ENCODE measurements at regions of chr19 and their contacts with region 1.

Region 1: DNA sequence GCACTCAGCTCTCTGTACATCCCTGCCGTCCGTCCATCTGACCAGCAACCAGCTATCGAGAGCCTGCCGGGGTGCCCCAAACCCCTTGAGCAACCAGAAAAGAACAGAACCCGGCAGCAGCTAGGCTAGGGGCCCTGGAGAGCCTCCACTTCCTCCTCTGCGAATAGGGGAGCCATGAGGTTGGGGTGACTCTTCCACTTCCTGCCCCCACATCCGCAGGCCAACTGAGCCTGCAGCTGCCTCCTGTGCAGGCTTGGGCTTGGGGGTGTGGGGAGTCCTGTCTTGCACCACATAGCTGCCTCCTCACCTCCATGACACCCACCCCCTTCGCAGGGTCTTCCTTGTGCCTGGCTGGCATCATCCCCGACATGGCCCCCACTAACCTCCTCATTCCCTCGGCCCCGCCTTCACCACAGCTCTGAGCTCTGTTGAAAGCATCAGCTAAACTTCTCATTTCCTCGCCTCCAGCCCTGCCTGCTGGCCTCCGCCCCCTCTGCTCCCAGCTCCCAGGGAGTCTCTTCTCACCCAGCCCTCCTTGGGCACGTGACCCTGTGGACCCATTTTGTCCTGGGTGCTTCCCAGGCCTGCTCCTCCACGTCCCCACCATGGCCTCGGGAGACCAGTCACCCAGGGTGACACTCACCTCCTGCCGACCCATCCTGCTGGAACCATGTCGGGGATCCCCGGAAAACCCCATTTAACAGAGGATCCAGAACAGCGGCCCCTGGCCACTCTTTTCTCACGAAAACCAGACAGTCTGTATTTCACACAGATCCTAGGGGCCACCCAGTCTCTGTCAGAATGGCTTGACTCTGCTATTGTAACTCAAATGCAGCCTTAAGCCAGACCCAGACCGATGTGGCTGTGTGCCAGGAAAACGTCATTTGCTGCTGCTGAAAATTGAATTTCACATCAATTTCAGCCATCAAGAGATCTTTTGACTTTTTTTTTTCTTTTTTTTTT is 50.4 kb downstream of the MYO9B start:
- DNase-seq: peak; percentile 60 to 95 (median 80)
- ATAC-seq: peak; percentile 81
- H3K4me3 ChIP-seq: peak overlapping the region; percentile 40 to 41
- H3K4me3 Mint-ChIP-seq: peak overlapping the region; percentile 83
- H3K27ac ChIP-seq: peak overlapping the region; percentile 85 to 89
- H3K27ac Mint-ChIP-seq: peak overlapping the region; percentile 99
- H3K4me1 ChIP-seq: peaks cover 52% of the 10 kb centered on the region
- H3K4me1 Mint-ChIP-seq: peaks cover 71% of the 10 kb centered on the region
- H3K27me3 ChIP-seq: no peaks in the 10 kb centered on the region
- H3K27me3 Mint-ChIP-seq: no peaks in the 10 kb centered on the region
- CTCF ChIP-seq: no peak

Region 2: DNA sequence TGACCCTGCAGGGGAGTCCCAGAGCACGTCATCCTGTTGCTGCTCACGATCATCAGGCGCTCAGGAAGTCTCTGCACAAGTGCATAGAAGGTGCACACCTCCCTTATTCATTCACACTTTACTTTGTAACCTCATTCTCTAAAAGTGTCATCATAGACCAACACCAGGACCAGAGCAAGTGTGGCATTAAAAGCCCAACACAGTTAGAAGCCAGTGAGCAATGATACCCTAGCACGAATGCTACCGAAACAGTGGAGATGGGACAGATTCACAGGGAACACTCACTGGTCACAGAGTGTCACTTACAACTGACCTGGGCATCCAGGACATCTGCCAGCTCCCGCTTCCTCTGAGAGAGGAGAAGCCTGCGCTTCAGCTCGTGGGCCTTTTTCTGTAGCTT is 67.8 kb before region 1 on chr19:
- CTCF ChIA-PET with region 1: no interaction called
- POLR2A ChIA-PET with region 1: no interaction called
- intact Hi-C with region 1: no loop called
- DNase-seq: no peak
- ATAC-seq: no peak
- H3K4me3 ChIP-seq: no peak overlapping the region
- H3K4me3 Mint-ChIP-seq: no peak overlapping the region
- H3K27ac ChIP-seq: no peak overlapping the region
- H3K27ac Mint-ChIP-seq: no peak overlapping the region
- H3K4me1 ChIP-seq: no peaks in the 10 kb centered on the region
- H3K4me1 Mint-ChIP-seq: no peaks in the 10 kb centered on the region
- H3K27me3 ChIP-seq: no peaks in the 10 kb centered on the region
- H3K27me3 Mint-ChIP-seq: no peaks in the 10 kb centered on the region
- CTCF ChIP-seq: no peak

Region 3: DNA sequence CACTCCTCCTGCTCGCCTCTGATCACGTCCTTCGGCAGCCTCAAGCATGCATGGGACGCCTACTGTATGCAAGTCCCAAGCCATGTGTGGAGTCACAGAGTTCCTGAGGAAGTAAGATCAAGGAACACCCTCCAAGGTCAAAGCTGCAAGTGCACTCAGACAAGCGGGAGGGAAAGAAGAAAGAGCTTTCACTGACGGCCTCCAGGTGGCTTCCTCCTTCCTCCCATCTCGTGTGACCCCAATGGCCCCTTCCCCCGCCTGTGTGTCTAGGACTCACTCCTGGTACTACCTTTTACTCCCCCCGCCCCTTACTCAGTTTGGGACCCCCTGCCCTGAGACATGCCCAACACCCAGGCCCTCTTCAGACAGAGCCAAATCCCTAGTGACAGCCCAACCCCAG is 56.8 kb before region 1 on chr19:
- CTCF ChIA-PET with region 1: interaction called, 3 read pairs
- POLR2A ChIA-PET with region 1: interaction called, 41 read pairs
- intact Hi-C with region 1: loop called (anchors 1 to 2 kb)
- DNase-seq: no peak
- ATAC-seq: no peak
- H3K4me3 ChIP-seq: no peak overlapping the region
- H3K4me3 Mint-ChIP-seq: no peak overlapping the region
- H3K27ac ChIP-seq: no peak overlapping the region
- H3K27ac Mint-ChIP-seq: no peak overlapping the region
- H3K4me1 ChIP-seq: peaks cover 27% of the 10 kb centered on the region
- H3K4me1 Mint-ChIP-seq: peaks cover 48% of the 10 kb centered on the region
- H3K27me3 ChIP-seq: no peaks in the 10 kb centered on the region
- H3K27me3 Mint-ChIP-seq: no peaks in the 10 kb centered on the region
- CTCF ChIP-seq: no peak

Region 4: DNA sequence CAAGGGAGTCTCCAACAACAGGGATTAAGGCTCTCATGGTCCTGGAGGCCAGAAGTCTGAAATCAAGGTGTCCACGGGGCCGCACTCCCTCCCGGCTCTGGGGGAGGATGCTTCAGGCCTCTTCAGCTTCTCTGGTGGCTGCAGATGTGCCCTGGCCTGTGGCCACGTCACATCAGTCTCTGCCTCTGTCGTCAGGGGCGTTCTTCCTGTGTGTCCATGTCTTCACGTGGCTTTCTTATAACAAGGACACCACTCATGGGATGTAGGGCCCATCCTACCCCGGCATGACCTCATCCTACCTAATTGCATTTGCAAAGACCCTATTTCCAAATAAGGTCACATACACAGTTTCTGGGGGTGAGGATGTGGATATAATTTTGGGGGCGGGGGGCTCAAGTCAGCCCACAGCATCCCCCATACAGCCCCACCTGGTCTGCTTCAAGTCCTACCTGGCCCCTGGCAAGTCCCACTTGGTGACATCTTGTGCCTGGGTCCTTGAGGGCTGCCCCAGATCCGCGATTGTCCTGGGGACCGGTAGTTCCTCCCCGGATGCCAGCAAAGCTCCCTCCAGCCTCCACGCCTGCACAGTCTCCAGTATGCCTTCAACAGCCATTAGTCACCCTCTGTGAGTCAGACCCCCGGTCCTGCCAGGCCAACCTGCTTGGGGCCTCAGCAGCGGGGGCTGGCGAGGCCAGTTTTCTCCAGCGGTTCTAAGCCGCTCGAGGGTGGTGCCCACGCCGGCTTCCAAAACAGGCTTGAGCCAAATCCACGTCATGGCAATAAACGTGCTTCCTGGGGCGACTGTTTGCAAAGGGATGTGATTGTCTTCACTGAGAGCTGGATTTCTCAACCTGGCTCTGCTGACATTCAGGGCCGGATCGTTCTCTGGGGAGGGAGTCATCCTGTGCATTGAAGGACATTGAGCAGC is 18.2 kb before region 1 on chr19:
- CTCF ChIA-PET with region 1: interaction called, 3 read pairs
- POLR2A ChIA-PET with region 1: interaction called, 11 read pairs
- intact Hi-C with region 1: no loop called
- DNase-seq: peak in 1 of 9 experiments; percentile 37
- ATAC-seq: no peak
- H3K4me3 ChIP-seq: no peak overlapping the region
- H3K4me3 Mint-ChIP-seq: no peak overlapping the region
- H3K27ac ChIP-seq: no peak overlapping the region
- H3K27ac Mint-ChIP-seq: peak overlapping the region; percentile 62
- H3K4me1 ChIP-seq: peaks cover 20% of the 10 kb centered on the region
- H3K4me1 Mint-ChIP-seq: peaks cover 59% of the 10 kb centered on the region
- H3K27me3 ChIP-seq: no peaks in the 10 kb centered on the region
- H3K27me3 Mint-ChIP-seq: no peaks in the 10 kb centered on the region
- CTCF ChIP-seq: no peak

Region 5: GRCh38 chr19:17183858-17184321 is 57.9 kb after region 1 on chr19:
- CTCF ChIA-PET with region 1: interaction called, 6 read pairs
- POLR2A ChIA-PET with region 1: interaction called, 20 read pairs
- intact Hi-C with region 1: loop called (anchors 5 to 10 kb)
- DNase-seq: peak in 6 of 9 experiments; percentile 19 to 71 (median 42)
- ATAC-seq: peak; percentile 56
- H3K4me3 ChIP-seq: peak overlapping the region; percentile 36 to 52
- H3K4me3 Mint-ChIP-seq: peak overlapping the region; percentile 92
- H3K27ac ChIP-seq: peak overlapping the region; percentile 57 to 78
- H3K27ac Mint-ChIP-seq: peak overlapping the region; percentile 97
- H3K4me1 ChIP-seq: peaks cover 20% of the 10 kb centered on the region
- H3K4me1 Mint-ChIP-seq: peaks cover 32% of the 10 kb centered on the region
- H3K27me3 ChIP-seq: no peaks in the 10 kb centered on the region
- H3K27me3 Mint-ChIP-seq: no peaks in the 10 kb centered on the region
- CTCF ChIP-seq: no peak

Region 6: GRCh38 chr19:17226002-17226933 is 100.3 kb after region 1 on chr19 and contains the start of gene OCEL1:
- CTCF ChIA-PET with region 1: no interaction called
- POLR2A ChIA-PET with region 1: interaction called, 11 read pairs
- intact Hi-C with region 1: no loop called
- DNase-seq: peak; percentile 92 to 99 (median 96)
- ATAC-seq: peak; percentile 91
- H3K4me3 ChIP-seq: peak within 1 kb of the TSS; percentile 71 to 100
- H3K4me3 Mint-ChIP-seq: peak within 1 kb of the TSS; percentile 91
- H3K27ac ChIP-seq: peak within 1 kb of the TSS; percentile 89 to 96
- H3K27ac Mint-ChIP-seq: peak within 1 kb of the TSS; percentile 95
- H3K4me1 ChIP-seq: peaks cover 13% of the 10 kb centered on the region
- H3K4me1 Mint-ChIP-seq: peaks cover 8% of the 10 kb centered on the region
- H3K27me3 ChIP-seq: no peaks in the 10 kb centered on the region
- H3K27me3 Mint-ChIP-seq: no peaks in the 10 kb centered on the region
- CTCF ChIP-seq: no peak
- total RNA-seq, gene OCEL1: 20.9 to 24.9 TPM

Region 7: GRCh38 chr19:17235618-17236377 is 109.8 kb after region 1 on chr19:
- CTCF ChIA-PET with region 1: interaction called, 4 read pairs
- POLR2A ChIA-PET with region 1: interaction called, 6 read pairs
- intact Hi-C with region 1: loop called in 1 of 2 experiments (anchors 2 kb)
- DNase-seq: peak; percentile 52 to 91 (median 78)
- ATAC-seq: peak; percentile 89
- H3K4me3 ChIP-seq: peak overlapping the region; percentile 63 to 86
- H3K4me3 Mint-ChIP-seq: peak overlapping the region; percentile 78
- H3K27ac ChIP-seq: peak overlapping the region in 1 of 2 experiments; percentile 40
- H3K27ac Mint-ChIP-seq: no peak overlapping the region
- H3K4me1 ChIP-seq: peaks cover 13% of the 10 kb centered on the region
- H3K4me1 Mint-ChIP-seq: peaks cover 10% of the 10 kb centered on the region
- H3K27me3 ChIP-seq: no peaks in the 10 kb centered on the region
- H3K27me3 Mint-ChIP-seq: no peaks in the 10 kb centered on the region
- CTCF ChIP-seq: peak; percentile 58